Psoas muscle (tissue), 8 donors: ENCODE measurements at regions of chr15 and their contacts with region 1.

Region 1: GRCh38 chr15:84748274-84749110 is at the start of gene ZNF592:
- DNase-seq: peak; percentile 88 to 93
- ATAC-seq: peak; percentile 66 to 76 (median 72)
- H3K4me3 ChIP-seq: peak within 1 kb of the TSS; percentile 92
- H3K27ac ChIP-seq: peak within 1 kb of the TSS; percentile 99
- H3K4me1 ChIP-seq: peaks cover 67% of the 10 kb centered on the region
- H3K27me3 ChIP-seq: no peaks in the 10 kb centered on the region
- CTCF ChIP-seq: peak; percentile 58
- total RNA-seq, gene ZNF592: 33.4 to 39.5 (median 35.5) TPM

Region 2: GRCh38 chr15:84658080-84658787 is 90.3 kb before region 1 on chr15 and contains the start of gene NMB:
- intact Hi-C with region 1: loop called in 1 of 2 experiments (anchors 5 kb)
- DNase-seq: peak; percentile 81 to 90
- ATAC-seq: peak; percentile 61 to 80 (median 74)
- H3K4me3 ChIP-seq: peak within 1 kb of the TSS; percentile 73
- H3K27ac ChIP-seq: peak within 1 kb of the TSS; percentile 80
- H3K4me1 ChIP-seq: peaks cover 18% of the 10 kb centered on the region
- H3K27me3 ChIP-seq: no peaks in the 10 kb centered on the region
- CTCF ChIP-seq: peak; percentile 44
- total RNA-seq, gene NMB: 1.0 to 2.1 (median 1.2) TPM

Region 3: DNA sequence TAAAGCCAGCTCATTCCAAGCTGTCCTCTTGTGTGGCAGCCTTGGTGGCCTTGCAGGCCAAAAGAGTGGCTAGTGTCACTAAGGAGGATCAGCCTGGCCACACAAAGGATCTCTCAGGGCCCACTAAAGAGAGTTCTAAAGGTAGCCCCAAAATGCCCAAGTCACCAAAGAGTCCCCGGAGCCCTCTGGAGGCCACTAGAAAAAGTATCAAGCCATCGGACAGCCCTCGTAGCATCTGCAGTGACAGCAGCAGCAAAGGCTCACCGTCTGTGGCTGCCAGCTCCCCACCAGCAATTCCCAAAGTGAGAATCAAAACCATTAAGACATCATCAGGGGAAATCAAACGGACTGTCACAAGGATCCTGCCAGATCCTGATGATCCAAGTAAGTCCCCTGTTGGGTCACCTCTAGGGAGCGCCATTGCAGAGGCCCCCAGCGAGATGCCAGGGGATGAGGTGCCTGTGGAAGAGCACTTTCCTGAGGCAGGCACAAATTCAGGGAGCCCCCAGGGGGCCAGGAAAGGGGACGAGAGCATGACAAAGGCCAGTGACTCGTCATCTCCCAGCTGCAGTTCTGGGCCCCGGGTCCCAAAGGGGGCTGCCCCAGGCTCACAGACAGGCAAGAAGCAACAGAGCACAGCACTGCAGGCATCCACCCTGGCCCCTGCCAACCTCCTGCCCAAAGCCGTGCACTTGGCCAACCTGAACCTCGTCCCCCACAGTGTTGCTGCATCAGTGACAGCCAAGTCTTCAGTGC is 35.2 kb after region 1 on chr15:
- intact Hi-C with region 1: loop called in 1 of 2 experiments (anchors 2 kb)
- DNase-seq: no peak
- ATAC-seq: no peak
- H3K4me3 ChIP-seq: no peak overlapping the region
- H3K27ac ChIP-seq: peak overlapping the region; percentile 89
- H3K4me1 ChIP-seq: peaks cover 37% of the 10 kb centered on the region
- H3K27me3 ChIP-seq: no peaks in the 10 kb centered on the region
- CTCF ChIP-seq: no peak

Region 4: DNA sequence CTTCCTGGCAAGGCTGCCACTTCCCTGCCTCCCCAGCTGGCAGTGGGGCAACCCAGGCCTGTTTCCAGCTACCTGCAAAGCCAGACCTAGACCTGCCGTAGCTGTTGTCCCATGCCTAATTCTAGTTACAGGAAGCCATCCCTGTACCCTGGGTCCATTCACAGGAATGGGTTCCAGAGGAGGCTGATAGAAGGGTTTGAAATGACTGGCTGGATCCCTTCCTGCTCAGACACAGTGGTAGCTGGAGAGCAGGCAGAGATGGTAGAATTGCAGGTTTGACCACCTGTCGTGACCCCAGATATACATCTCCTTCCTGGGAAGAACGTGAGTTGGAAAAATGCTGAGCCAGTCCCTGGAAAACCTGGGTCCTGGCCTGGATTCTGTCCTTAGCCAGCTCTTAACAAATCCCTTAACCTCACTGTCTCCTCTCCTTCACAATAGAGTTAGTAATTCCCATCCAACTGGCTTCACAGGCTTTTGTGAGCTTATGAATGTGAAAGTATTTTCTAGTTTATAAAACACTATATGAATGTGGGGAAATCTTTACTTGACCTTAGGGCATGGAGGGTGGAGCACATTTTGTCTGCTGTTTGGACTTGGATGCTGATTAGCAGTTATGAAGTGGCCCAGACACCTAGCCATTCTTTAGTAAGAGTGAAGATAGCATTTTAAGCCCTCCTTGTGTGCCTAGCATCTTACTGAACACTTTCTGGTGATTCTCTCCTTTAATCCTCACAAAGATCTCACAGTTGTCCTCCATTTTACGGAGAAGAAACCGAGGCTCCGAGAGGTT is 55.8 kb after region 1 on chr15:
- intact Hi-C with region 1: no loop called
- DNase-seq: no peak
- ATAC-seq: peak in 1 of 4 donors; percentile 30
- H3K4me3 ChIP-seq: no peak overlapping the region
- H3K27ac ChIP-seq: peak overlapping the region; percentile 23
- H3K4me1 ChIP-seq: no peaks in the 10 kb centered on the region
- H3K27me3 ChIP-seq: no peaks in the 10 kb centered on the region
- CTCF ChIP-seq: no peak

Region 5: DNA sequence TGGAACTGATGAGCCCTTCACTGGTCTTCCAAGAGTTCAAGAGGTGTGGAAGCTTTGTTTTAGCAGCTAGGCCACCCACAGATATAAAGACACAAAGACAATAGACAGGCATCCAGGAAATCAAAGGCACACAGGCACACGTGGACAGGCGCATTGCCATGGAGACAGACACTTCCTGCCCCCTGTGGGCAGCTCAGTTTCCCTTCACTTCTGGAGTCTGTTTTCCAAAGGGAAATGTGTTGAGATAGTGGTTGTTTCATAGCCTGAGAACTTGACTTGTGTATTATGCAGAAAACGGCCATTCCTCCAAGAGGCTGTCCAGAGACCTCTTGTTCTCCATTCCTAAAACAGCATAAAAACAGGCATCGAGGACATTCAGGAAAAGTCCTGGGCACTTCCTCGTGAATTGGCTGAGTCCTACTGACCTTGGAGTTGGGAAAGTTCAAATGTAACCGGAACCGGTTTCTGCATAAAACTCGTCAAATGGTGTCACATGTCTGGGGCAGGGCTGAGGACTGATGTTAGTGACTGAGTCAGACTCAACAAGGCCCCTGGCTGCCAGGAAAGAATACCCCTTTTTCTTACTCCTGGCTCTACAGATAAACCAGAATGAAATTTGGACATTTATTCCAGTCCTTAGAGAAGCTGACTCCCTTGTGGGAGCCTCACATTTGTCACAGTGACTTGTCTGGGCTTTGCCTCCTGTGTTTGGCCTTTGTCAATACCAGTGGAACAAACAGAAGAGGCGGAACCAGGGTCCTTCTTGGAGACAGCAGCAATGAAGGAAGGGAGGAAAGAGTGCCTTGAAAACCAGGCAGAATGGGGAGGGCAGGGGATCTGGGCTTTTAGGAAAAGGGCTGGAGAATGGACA is 70.0 kb after region 1 on chr15:
- intact Hi-C with region 1: loop called in 1 of 2 experiments (anchors 5 kb)
- DNase-seq: peak; percentile 46 to 73
- ATAC-seq: peak; percentile 38 to 75 (median 53)
- H3K4me3 ChIP-seq: peak overlapping the region; percentile 90
- H3K27ac ChIP-seq: peak overlapping the region; percentile 99
- H3K4me1 ChIP-seq: peaks cover 55% of the 10 kb centered on the region
- H3K27me3 ChIP-seq: no peaks in the 10 kb centered on the region
- CTCF ChIP-seq: no peak